Panc1 (cell line): ENCODE measurements at regions of chr1 and their contacts with region 1.

Region 1: DNA sequence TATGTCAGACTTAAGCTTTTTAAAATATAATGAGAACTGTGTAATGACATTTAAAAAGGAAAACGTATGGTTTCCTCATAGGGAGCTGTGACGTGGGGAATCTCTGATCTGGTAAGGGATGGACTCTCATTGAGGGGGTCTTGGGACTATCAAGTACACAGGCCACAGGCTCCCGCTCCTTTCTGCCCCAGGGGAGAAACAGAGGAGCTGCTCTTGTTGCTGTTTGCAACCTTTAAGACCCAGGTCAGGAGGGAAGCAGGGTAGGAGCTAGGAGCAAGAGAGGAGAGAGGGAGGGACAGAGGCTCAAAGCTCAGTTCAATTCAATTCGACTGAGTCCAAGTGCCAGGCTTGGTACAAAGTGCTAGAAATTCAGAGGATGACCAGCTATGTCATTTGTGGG is 185.1 kb upstream of the CSF3R start:
- DNase-seq: no peak
- ATAC-seq: no peak
- H3K4me3 ChIP-seq: no peak overlapping the region
- H3K27ac ChIP-seq: no peak overlapping the region
- H3K4me1 ChIP-seq: no peaks in the 10 kb centered on the region
- H3K27me3 ChIP-seq: peaks cover 17% of the 10 kb centered on the region
- CTCF ChIP-seq: no peak

Region 2: GRCh38 chr1:36594023-36594422 is 73.8 kb before region 1 on chr1:
- CTCF ChIA-PET with region 1: no interaction called
- POLR2A ChIA-PET with region 1: interaction called, 13 read pairs
- in situ Hi-C with region 1: no loop called
- intact Hi-C with region 1: no loop called
- DNase-seq: no peak
- ATAC-seq: no peak
- H3K4me3 ChIP-seq: no peak overlapping the region
- H3K27ac ChIP-seq: no peak overlapping the region
- H3K4me1 ChIP-seq: no peaks in the 10 kb centered on the region; the same call in 1 of the 2 replicates
- H3K27me3 ChIP-seq: peaks cover 13% of the 10 kb centered on the region
- CTCF ChIP-seq: no peak